ENCODE measurements at regions of chr6 and their contacts with region 1.

Region 1: GRCh38 chr6:31739639-31740396 is at the start of gene MSH5:
- DNase-seq: peak; percentile 100
- H3K4me3 ChIP-seq: peak within 1 kb of the TSS; percentile 37 to 83 (median 73)
- H3K27ac ChIP-seq: peak within 1 kb of the TSS; percentile 74 to 95 (median 77)
- H3K4me1 ChIP-seq: peaks cover 0 to 31% (median 24%) of the 10 kb centered on the region in 4 donors
- H3K27me3 ChIP-seq: no peaks in the 10 kb centered on the region
- CTCF ChIP-seq: no peak
- EP300 ChIP-seq: no peak
- POLR2A ChIP-seq: peak in 1 of 2 donors; percentile 72
- total RNA-seq, gene MSH5: 4.2 to 23.5 (median 5.7) TPM

Region 2: GRCh38 chr6:31795616-31796298 is 55.9 kb after region 1 on chr6 and contains the start of gene VARS1:
- intact Hi-C with region 1: loop called (anchors 2 kb)
- DNase-seq: peak; percentile 96
- H3K4me3 ChIP-seq: peak within 1 kb of the TSS; percentile 80 to 97 (median 90)
- H3K27ac ChIP-seq: peak within 1 kb of the TSS; percentile 90 to 94 (median 91)
- H3K4me1 ChIP-seq: peaks cover 0 to 22% (median 17%) of the 10 kb centered on the region in 4 donors
- H3K27me3 ChIP-seq: no peaks in the 10 kb centered on the region
- CTCF ChIP-seq: peak; percentile 52 to 72 (median 72)
- EP300 ChIP-seq: peak in 1 of 4 donors; percentile 3
- POLR2A ChIP-seq: peak in 1 of 2 donors; percentile 35
- total RNA-seq, gene VARS1: 16.0 to 36.2 (median 27.7) TPM

Region 3: DNA sequence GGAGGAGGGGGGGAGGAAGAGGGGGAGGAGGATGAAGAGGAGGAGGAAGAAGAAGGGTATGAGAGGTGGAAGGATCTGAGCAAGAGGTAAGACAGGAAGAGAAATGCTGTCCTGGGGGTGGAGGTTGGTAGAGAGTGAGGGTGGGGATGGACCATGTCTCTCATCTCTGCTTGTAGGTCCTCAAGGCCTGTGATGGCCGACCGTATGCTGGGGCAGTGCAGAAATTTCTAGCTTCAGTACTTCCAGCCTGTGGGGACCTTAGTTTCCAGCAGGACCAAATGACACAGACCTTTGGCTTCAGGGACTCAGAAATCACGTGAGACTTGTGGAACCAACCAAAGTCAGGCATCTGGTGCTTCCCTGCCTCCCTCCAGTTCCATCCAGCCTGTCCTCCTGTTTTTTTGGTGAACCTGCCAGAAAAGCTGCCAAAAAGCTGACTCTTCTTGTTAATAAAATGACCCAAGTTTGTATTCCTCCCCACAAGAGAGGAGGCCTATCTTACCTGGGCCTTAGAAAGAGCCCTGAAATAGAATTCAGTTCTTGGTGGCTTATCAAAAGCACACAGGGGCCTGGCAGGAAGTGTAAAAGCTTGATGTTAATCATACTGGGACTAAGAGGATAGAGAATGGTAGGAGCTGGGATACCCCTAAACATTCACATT is 239.6 kb after region 1 on chr6:
- intact Hi-C with region 1: no loop called
- DNase-seq: peak; percentile 46
- H3K4me3 ChIP-seq: no peak overlapping the region
- H3K27ac ChIP-seq: peak overlapping the region in 2 of 4 donors; percentile 1 to 17
- H3K4me1 ChIP-seq: no peaks in the 10 kb centered on the region
- H3K27me3 ChIP-seq: no peaks in the 10 kb centered on the region
- CTCF ChIP-seq: no peak
- EP300 ChIP-seq: no peak
- POLR2A ChIP-seq: no peak

Measured in sigmoid colon (tissue), 7 donors.